Heart left ventricle (tissue), 16 donors: ENCODE measurements at regions of chr9 and their contacts with region 1.

Region 1: DNA sequence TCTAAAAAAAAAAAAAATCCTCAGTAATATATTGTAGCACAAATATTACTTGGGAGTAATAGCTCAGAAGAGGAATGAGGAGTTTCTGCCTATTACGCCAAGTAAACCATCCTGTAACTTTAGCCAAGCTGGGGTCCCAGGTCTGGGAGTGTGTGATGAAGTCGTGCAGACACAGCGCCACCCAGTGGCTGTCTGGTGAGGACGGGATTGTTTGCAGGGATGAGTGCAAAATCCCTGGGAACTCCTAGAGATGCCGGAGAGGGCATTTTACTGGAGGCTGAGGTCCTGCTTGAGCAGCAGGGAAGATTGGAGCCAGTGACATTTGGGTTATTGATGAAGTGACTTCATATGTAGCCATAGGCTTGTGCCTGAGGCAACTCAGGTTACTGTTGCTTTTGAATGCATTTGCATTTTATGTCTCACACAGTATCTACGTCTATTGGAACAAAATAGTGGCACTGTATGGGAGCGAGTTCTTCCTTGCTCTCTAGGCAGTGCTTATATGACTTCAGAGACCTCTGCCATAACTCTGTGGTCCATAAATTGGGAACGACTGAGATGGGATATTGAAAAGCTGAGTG is 72.8 kb downstream of the PSAT1 start:
- DNase-seq: peak; percentile 33 to 70 (median 44)
- ATAC-seq: peak in 3 of 4 donors; percentile 54 to 67 (median 56)
- H3K4me3 ChIP-seq: no peak overlapping the region
- H3K27ac ChIP-seq: no peak overlapping the region
- H3K4me1 ChIP-seq: no peaks in the 10 kb centered on the region
- H3K27me3 ChIP-seq: peaks cover 0 to 50% (median 8%) of the 10 kb centered on the region in 9 donors
- CTCF ChIP-seq: peak; percentile 45 to 78 (median 66)
- POLR2A ChIP-seq: no peak

Region 2: DNA sequence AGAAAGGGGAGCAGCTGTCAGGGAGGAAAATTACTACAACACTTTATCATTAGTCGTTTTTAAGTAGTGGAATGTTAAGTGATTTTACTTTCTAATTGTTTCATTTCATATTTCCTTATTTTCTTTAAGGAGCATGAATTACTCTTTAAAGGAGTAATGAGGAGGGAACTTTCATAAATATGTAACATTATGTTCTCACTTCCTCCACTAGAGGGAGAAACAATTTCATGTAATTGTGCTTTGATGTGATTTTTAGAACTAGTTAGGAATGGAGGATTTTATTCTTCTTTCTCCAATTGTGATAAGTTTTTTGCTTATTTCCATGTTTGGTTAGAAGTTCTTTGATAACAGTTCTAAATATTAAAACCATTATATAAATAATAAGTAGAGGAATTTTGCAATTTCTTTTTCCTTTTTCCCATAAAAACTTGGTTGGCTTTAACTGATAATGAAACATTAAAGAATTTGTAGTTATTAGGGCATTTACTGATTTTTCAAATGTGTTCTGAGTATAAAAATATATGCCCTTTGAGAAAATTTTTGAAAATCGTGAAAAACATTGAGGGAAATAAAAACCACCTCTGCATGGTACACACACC is 108.2 kb before region 1 on chr9:
- intact Hi-C with region 1: loop called (anchors 2 to 10 kb)
- DNase-seq: no peak
- ATAC-seq: no peak
- H3K4me3 ChIP-seq: no peak overlapping the region
- H3K27ac ChIP-seq: no peak overlapping the region
- H3K4me1 ChIP-seq: no peaks in the 10 kb centered on the region
- H3K27me3 ChIP-seq: no peaks in the 10 kb centered on the region
- CTCF ChIP-seq: peak; percentile 52 to 74 (median 60)
- POLR2A ChIP-seq: no peak